Activated CD4-positive, alpha-beta memory T cell treated with anti-CD3 and anti-CD28 coated beads, Interleukin-2, amount 10 ng/mL, durations not matched to agents 7 days and 5 days (primary cell): ENCODE measurements at regions of chr1 and their contacts with region 1.

Region 1: DNA sequence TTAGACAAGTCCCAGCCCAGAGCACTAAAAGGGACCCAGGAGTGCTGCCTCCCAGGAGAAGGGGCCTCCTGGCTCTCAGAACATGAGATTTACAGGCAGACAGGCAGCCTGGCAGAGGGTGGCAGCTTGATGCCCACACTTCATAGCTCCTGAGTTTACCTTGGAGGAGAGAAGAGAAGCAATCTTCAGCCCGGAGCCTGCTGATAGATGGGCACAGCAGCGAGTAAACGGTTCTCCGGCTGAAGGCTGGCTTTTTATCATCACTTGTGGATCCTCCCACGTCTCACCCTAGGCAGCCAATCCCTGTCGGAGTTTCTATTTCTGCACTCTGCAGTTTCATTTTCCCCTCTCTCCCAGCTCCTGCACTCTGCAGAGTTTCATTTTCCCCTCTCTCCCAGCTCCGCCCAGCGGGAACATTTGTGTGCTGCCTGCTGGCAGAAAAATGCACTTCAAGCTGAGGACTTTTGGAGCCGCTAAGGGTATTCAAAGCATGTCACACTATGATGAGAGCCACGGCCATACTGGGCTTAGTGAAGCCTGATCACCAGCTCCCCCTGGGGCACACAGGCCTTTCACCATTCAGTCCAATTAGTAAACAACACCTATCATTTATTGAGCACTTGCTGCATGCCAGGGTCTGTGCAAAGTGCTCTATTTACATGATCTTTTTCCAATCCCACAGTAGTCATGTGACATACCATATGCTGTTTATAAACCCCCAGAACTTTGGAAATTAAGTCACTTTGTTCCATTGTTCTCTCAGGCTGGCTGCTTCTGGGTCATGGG is at the start of gene IFI6:
- DNase-seq: peak; percentile 86
- H3K4me3 Mint-ChIP-seq: peak within 1 kb of the TSS; percentile 94
- H3K27ac Mint-ChIP-seq: peak within 1 kb of the TSS; percentile 94
- H3K4me1 Mint-ChIP-seq: peaks cover 42% of the 10 kb centered on the region
- H3K27me3 Mint-ChIP-seq: no peaks in the 10 kb centered on the region
- total RNA-seq, gene IFI6: 577 to 593 TPM

Region 2: GRCh38 chr1:27603681-27604578 is 68.2 kb before region 1 on chr1 and contains the start of gene AHDC1:
- CTCF ChIA-PET with region 1: interaction called, 448 read pairs
- POLR2A ChIA-PET with region 1: interaction called, 4 read pairs
- DNase-seq: peak; percentile 92
- H3K4me3 Mint-ChIP-seq: peak within 1 kb of the TSS; percentile 97
- H3K27ac Mint-ChIP-seq: peak within 1 kb of the TSS; percentile 80
- H3K4me1 Mint-ChIP-seq: peaks cover 48% of the 10 kb centered on the region
- H3K27me3 Mint-ChIP-seq: peaks cover 8% of the 10 kb centered on the region
- total RNA-seq, gene AHDC1: 16.9 to 18.9 TPM

Region 3: GRCh38 chr1:27690183-27690582 is 18.0 kb after region 1 on chr1:
- CTCF ChIA-PET with region 1: interaction called, 12 read pairs
- POLR2A ChIA-PET with region 1: interaction called, 3 read pairs
- DNase-seq: no peak
- H3K4me3 Mint-ChIP-seq: no peak overlapping the region
- H3K27ac Mint-ChIP-seq: no peak overlapping the region
- H3K4me1 Mint-ChIP-seq: peaks cover 18% of the 10 kb centered on the region
- H3K27me3 Mint-ChIP-seq: peaks cover 2% of the 10 kb centered on the region

Region 4: GRCh38 chr1:27772933-27773825 is 101.0 kb after region 1 on chr1 and contains the start of gene STX12:
- CTCF ChIA-PET with region 1: interaction called, 28 read pairs
- POLR2A ChIA-PET with region 1: interaction called, 17 read pairs
- DNase-seq: peak; percentile 100
- H3K4me3 Mint-ChIP-seq: peak within 1 kb of the TSS; percentile 94
- H3K27ac Mint-ChIP-seq: peak within 1 kb of the TSS; percentile 94
- H3K4me1 Mint-ChIP-seq: peaks cover 33% of the 10 kb centered on the region
- H3K27me3 Mint-ChIP-seq: no peaks in the 10 kb centered on the region
- total RNA-seq, gene STX12: 32.0 to 33.1 TPM

Region 5: DNA sequence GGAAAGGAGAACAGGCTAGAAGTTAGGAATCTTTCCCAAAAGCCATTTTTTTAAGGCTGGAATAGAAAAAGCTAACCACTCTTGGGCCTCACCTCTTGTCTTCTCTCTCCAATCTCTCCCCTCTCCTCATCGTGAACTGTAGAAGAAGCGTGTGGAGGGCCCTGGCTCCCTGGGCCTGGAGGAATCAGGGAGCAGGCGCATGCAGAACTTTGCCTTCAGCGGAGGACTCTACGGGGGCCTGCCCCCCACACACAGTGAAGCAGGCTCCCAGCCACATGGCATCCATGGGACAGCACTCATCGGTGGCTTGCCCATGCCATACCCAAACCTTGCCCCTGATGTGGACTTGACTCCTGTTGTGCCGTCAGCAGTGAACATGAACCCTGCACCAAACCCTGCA is 177.8 kb after region 1 on chr1:
- CTCF ChIA-PET with region 1: no interaction called
- POLR2A ChIA-PET with region 1: no interaction called
- DNase-seq: no peak
- H3K4me3 Mint-ChIP-seq: no peak overlapping the region
- H3K27ac Mint-ChIP-seq: no peak overlapping the region
- H3K4me1 Mint-ChIP-seq: no peaks in the 10 kb centered on the region
- H3K27me3 Mint-ChIP-seq: no peaks in the 10 kb centered on the region